B cell (primary cell): ENCODE measurements at regions of chr20 and their contacts with region 1.

Region 1: DNA sequence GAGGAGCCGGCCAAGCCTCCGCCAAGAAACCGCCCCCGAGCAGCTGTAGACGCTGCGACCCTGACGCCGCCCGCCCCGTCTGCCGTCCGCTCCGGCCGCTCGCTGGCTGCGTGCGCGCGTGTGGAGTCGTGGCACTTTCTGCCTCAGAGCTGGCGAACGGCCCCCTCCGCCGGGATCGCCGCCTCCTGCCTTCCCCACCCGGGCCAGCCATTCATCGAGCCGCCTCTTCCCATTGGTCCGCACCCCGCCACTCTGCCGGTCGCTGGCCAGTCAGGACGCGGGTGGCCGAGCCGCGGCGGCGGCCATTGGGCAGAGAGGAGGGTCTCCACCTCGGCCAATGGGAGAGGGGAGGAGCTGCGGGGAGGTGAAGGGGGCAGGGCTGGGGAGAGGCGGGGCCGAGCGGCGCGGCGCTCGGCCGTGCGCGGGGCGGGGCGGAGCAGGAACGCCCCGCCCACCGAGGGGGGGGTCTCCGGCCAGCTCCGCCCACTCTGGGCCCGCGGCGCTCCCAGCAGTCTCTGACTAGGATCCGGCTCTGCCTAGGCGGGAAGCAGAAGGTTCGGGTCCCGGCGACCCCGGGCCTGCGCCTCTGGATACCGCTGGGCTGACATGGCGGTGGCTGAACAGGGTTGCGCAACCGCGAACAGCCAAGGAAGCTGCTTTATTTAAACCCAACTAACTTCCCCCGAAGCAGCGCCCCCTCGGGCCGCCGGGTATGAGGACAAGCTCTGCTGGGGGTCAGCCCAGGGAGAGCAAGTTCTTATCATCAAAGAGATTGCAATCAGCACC is at the start of gene RRBP1:
- DNase-seq: peak; percentile 97
- ATAC-seq: peak; percentile 92
- H3K4me3 ChIP-seq: peak within 1 kb of the TSS; percentile 51 to 85 (median 72)
- H3K4me3 Mint-ChIP-seq: peak within 1 kb of the TSS; percentile 92
- H3K27ac ChIP-seq: peak within 1 kb of the TSS; percentile 46 to 74
- H3K27ac Mint-ChIP-seq: peak within 1 kb of the TSS; percentile 92
- H3K4me1 ChIP-seq: peaks cover 15 to 18% of the 10 kb centered on the region in 2 donors
- H3K4me1 Mint-ChIP-seq: peaks cover 20% of the 10 kb centered on the region
- H3K27me3 ChIP-seq: peaks cover 0 to 11% (median 4%) of the 10 kb centered on the region in 4 experiments
- H3K27me3 Mint-ChIP-seq: peaks cover 29% of the 10 kb centered on the region
- CTCF ChIP-seq: peak; percentile 90
- total RNA-seq, gene RRBP1: 27.5 and 29.1 TPM in 2 replicates

Region 2: DNA sequence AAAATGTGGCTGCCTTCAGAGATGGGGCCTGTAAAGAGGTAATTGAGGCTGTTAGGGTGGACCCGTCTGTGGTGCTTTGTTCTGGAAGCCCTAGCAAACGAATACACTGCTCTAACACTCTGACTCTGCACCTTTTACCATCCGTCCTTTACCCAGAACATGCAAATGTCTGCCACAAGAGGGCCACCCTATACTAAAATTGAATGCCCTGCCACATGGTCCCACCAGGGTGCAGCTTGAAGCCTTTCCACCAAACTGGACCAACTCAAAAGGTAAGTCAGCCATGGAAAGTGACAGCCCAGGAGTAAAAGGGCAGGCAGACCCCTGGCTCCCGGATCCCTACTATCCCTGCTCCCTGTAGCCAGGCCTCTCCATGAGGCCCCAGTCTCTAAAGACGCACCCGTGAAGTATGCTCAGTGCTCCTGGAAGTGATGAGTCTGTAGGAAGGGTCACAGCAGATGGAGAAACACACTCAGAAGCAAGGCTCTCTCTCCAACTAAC is 145.3 kb before region 1 on chr20:
- CTCF ChIA-PET with region 1: no interaction called
- POLR2A ChIA-PET with region 1: no interaction called
- intact Hi-C with region 1: loop called (anchors 10 kb)
- DNase-seq: peak; percentile 78
- ATAC-seq: peak; percentile 90
- H3K4me3 ChIP-seq: no peak overlapping the region
- H3K4me3 Mint-ChIP-seq: no peak overlapping the region
- H3K27ac ChIP-seq: no peak overlapping the region
- H3K27ac Mint-ChIP-seq: no peak overlapping the region
- H3K4me1 ChIP-seq: no peaks in the 10 kb centered on the region
- H3K4me1 Mint-ChIP-seq: no peaks in the 10 kb centered on the region
- H3K27me3 ChIP-seq: peaks cover 0 to 15% (median 2%) of the 10 kb centered on the region in 4 experiments
- H3K27me3 Mint-ChIP-seq: peaks cover 39% of the 10 kb centered on the region
- CTCF ChIP-seq: peak; percentile 87

Region 3: GRCh38 chr20:17598013-17598550 is 84.2 kb before region 1 on chr20:
- CTCF ChIA-PET with region 1: no interaction called
- POLR2A ChIA-PET with region 1: no interaction called
- intact Hi-C with region 1: no loop called
- DNase-seq: no peak
- ATAC-seq: no peak
- H3K4me3 ChIP-seq: no peak overlapping the region
- H3K4me3 Mint-ChIP-seq: no peak overlapping the region
- H3K27ac ChIP-seq: no peak overlapping the region
- H3K27ac Mint-ChIP-seq: no peak overlapping the region
- H3K4me1 ChIP-seq: no peaks in the 10 kb centered on the region
- H3K4me1 Mint-ChIP-seq: peaks cover 4% of the 10 kb centered on the region
- H3K27me3 ChIP-seq: no peaks in the 10 kb centered on the region
- H3K27me3 Mint-ChIP-seq: no peaks in the 10 kb centered on the region
- CTCF ChIP-seq: no peak

Region 4: DNA sequence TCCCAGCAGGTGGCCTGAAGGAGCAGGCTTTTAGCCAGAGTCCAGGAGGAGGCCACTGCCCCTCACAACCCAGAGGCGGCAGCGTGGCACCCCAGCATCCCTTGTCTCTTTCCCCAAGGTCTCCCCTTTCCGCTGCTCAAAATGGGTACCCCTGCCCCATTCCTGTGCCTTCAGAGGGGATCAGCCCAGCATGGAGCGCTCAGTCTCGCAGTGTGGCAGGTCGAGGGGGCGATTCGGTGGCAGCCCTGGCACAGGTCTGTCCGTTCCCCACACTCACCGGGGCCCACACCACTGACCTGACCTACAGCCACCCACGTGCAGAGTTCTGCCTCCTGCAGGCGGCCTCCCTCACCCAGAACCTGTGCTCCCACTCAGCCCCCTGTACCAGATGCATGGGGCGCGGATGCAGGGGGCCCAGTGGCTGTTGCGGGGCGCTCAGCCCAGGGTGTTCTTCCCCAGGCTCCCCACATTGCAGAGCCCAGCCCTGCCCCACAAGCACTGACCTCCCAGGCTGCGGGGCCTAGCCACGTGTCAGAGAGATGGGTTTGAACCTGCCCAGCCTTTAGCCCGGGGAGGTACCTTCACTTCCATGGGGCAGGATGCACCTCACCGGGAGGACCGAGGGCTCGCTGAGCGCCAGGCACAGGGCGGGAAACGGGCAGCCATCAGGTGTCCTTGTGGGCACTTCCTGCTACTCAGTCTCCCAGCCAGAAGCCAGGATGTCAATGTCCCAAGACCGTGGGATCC is 70.6 kb before region 1 on chr20:
- CTCF ChIA-PET with region 1: no interaction called
- POLR2A ChIA-PET with region 1: no interaction called
- intact Hi-C with region 1: no loop called
- DNase-seq: no peak
- ATAC-seq: no peak
- H3K4me3 ChIP-seq: no peak overlapping the region
- H3K4me3 Mint-ChIP-seq: no peak overlapping the region
- H3K27ac ChIP-seq: no peak overlapping the region
- H3K27ac Mint-ChIP-seq: no peak overlapping the region
- H3K4me1 ChIP-seq: peaks cover 14 to 28% of the 10 kb centered on the region in 2 donors
- H3K4me1 Mint-ChIP-seq: peaks cover 17% of the 10 kb centered on the region
- H3K27me3 ChIP-seq: no peaks in the 10 kb centered on the region
- H3K27me3 Mint-ChIP-seq: no peaks in the 10 kb centered on the region
- CTCF ChIP-seq: no peak

Region 5: GRCh38 chr20:17854307-17854903 is 172.1 kb after region 1 on chr20:
- CTCF ChIA-PET with region 1: interaction called, 18 read pairs
- POLR2A ChIA-PET with region 1: interaction called, 7 read pairs
- intact Hi-C with region 1: loop called (anchors 5 kb)
- DNase-seq: no peak
- ATAC-seq: no peak
- H3K4me3 ChIP-seq: no peak overlapping the region
- H3K4me3 Mint-ChIP-seq: no peak overlapping the region
- H3K27ac ChIP-seq: no peak overlapping the region
- H3K27ac Mint-ChIP-seq: peak overlapping the region; percentile 18
- H3K4me1 ChIP-seq: peaks cover 50 to 63% of the 10 kb centered on the region in 2 donors
- H3K4me1 Mint-ChIP-seq: peaks cover 67% of the 10 kb centered on the region
- H3K27me3 ChIP-seq: no peaks in the 10 kb centered on the region
- H3K27me3 Mint-ChIP-seq: no peaks in the 10 kb centered on the region
- CTCF ChIP-seq: no peak

Region 6: GRCh38 chr20:17898548-17898994 is 216.3 kb after region 1 on chr20:
- CTCF ChIA-PET with region 1: interaction called, 159 read pairs
- POLR2A ChIA-PET with region 1: interaction called, 4 read pairs
- intact Hi-C with region 1: loop called (anchors 1 kb)
- DNase-seq: peak; percentile 78
- ATAC-seq: peak; percentile 80
- H3K4me3 ChIP-seq: no peak overlapping the region
- H3K4me3 Mint-ChIP-seq: no peak overlapping the region
- H3K27ac ChIP-seq: no peak overlapping the region
- H3K27ac Mint-ChIP-seq: peak overlapping the region; percentile 0
- H3K4me1 ChIP-seq: peaks cover 47 to 48% of the 10 kb centered on the region in 2 donors
- H3K4me1 Mint-ChIP-seq: peaks cover 46% of the 10 kb centered on the region
- H3K27me3 ChIP-seq: peaks cover 0 to 4% (median 2%) of the 10 kb centered on the region in 4 experiments
- H3K27me3 Mint-ChIP-seq: peaks cover 21% of the 10 kb centered on the region
- CTCF ChIP-seq: peak; percentile 98

Region 7: DNA sequence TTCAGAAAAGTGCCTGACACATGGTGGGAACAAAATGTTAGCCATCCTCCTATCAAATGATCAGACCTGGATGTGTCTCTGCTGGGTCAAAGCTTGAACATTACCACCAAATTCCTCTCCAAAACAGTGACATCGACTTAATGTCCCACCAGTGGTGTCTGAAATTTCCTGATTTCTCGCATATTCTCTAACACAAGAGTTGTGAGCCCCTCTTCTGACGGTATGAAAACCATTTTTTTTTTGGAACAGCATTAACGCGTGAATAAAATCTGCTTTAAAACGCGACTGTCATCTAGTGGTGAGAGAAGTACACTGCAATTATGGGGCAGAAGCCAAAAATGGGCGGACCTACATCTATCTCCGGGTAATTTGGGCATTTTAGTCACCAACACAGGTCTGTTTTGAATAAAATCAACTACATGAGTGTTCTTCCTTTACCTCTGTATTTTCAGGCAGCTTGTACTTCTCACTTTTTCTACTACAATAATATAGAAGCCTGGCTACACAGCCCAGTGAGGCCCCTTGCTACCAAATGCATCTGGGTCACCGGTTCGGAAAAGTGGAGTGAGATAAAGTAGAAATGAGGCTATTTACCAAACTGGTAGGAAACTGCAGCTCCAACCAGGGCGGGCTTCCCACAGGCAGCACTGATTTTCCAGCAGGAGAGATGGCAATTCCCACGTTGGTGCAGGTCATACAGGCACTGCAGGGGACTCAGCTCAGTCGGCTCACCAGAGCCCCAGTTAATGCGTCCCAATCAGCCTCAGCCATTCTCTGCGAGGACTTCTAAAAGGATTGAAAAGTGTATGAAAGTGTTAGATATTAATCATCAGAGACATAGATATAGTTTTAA is 313.9 kb after region 1 on chr20:
- CTCF ChIA-PET with region 1: interaction called, 54 read pairs
- POLR2A ChIA-PET with region 1: interaction called, 4 read pairs
- intact Hi-C with region 1: loop called (anchors 1 kb)
- DNase-seq: peak; percentile 79
- ATAC-seq: peak; percentile 94
- H3K4me3 ChIP-seq: no peak overlapping the region
- H3K4me3 Mint-ChIP-seq: no peak overlapping the region
- H3K27ac ChIP-seq: no peak overlapping the region
- H3K27ac Mint-ChIP-seq: peak overlapping the region; percentile 54
- H3K4me1 ChIP-seq: peaks cover 16% of the 10 kb centered on the region in 2 donors
- H3K4me1 Mint-ChIP-seq: peaks cover 22% of the 10 kb centered on the region
- H3K27me3 ChIP-seq: no peaks in the 10 kb centered on the region
- H3K27me3 Mint-ChIP-seq: peaks cover 3% of the 10 kb centered on the region
- CTCF ChIP-seq: peak; percentile 99

Region 8: DNA sequence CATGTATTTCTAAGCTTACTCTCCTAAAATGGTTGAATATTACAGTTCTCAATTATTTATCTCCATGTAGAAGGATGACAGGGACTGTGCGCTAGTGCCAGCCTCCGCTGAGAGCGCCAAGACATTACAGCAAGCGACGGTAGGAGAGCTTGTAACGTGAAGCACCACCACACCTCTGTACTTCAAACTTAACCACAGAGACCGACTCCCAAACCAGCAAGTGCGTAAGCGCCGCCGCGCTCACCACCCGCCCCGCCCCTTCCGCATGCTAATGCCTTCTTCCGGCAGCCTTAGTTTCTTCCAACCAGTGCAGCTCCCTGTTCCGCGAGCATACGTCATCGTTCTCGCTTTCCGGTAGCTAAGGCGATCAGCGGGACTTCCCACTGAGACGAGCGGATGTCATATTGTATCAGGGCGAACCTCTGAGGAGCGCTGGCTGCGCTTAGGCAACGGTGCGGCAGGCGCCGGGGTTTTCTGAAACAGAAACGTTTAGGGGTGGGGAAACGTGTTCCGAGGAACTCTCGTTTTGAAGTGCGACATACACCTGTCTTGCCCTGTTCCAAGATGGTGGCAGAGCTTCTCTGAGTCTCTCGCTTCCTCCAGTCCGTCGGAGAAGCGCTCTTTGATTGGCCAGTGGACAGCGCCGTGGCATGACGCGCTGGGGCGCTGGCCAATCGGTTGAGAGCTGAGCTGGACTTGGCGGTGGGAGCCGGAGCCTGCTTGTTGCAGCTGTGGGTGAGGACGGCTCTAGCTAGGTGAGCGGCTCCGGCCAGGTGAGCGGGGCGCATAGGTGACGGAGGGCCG is 825.1 kb after region 1 on chr20 and contains the start of gene SEC23B:
- CTCF ChIA-PET with region 1: no interaction called
- POLR2A ChIA-PET with region 1: no interaction called
- intact Hi-C with region 1: loop called (anchors 2 kb)
- DNase-seq: peak; percentile 100
- ATAC-seq: peak; percentile 89
- H3K4me3 ChIP-seq: peak within 1 kb of the TSS; percentile 57 to 88 (median 80)
- H3K4me3 Mint-ChIP-seq: peak within 1 kb of the TSS; percentile 99
- H3K27ac ChIP-seq: peak within 1 kb of the TSS; percentile 98
- H3K27ac Mint-ChIP-seq: peak within 1 kb of the TSS; percentile 98
- H3K4me1 ChIP-seq: peaks cover 13 to 17% of the 10 kb centered on the region in 2 donors
- H3K4me1 Mint-ChIP-seq: peaks cover 22% of the 10 kb centered on the region
- H3K27me3 ChIP-seq: no peaks in the 10 kb centered on the region
- H3K27me3 Mint-ChIP-seq: peaks cover 6% of the 10 kb centered on the region
- CTCF ChIP-seq: no peak
- total RNA-seq, gene SEC23B: 39.4 and 48.1 TPM in 2 replicates

Region 9: GRCh38 chr20:18793625-18794427 is 1111.5 kb after region 1 on chr20:
- CTCF ChIA-PET with region 1: no interaction called
- POLR2A ChIA-PET with region 1: no interaction called
- intact Hi-C with region 1: loop called (anchors 10 kb)
- DNase-seq: peak; percentile 95
- ATAC-seq: peak; percentile 94
- H3K4me3 ChIP-seq: peak overlapping the region; percentile 69 to 86 (median 73)
- H3K4me3 Mint-ChIP-seq: peak overlapping the region; percentile 97
- H3K27ac ChIP-seq: peak overlapping the region; percentile 90 to 93
- H3K27ac Mint-ChIP-seq: peak overlapping the region; percentile 99
- H3K4me1 ChIP-seq: peaks cover 6 to 14% of the 10 kb centered on the region in 2 donors
- H3K4me1 Mint-ChIP-seq: peaks cover 20% of the 10 kb centered on the region
- H3K27me3 ChIP-seq: peaks cover 0 to 8% (median 2%) of the 10 kb centered on the region in 4 experiments
- H3K27me3 Mint-ChIP-seq: peaks cover 16% of the 10 kb centered on the region
- CTCF ChIP-seq: peak; percentile 24